Naive thymus-derived CD4-positive, alpha-beta T cell (primary cell): ENCODE measurements at regions of chr19 and their contacts with region 1.

Region 1: GRCh38 chr19:2236314-2237050 is at the starts of genes PLEKHJ1 and SF3A2:
- DNase-seq: peak; percentile 96 to 100 (median 100)
- ATAC-seq: peak; percentile 90
- H3K4me3 ChIP-seq: peak within 1 kb of the TSS; percentile 75
- H3K4me3 Mint-ChIP-seq: peak within 1 kb of the TSS; percentile 96 to 100 (median 98)
- H3K27ac ChIP-seq: peak within 1 kb of the TSS; percentile 93
- H3K27ac Mint-ChIP-seq: peak within 1 kb of the TSS; percentile 96 to 99 (median 98)
- H3K4me1 ChIP-seq: peaks cover 42 to 50% of the 10 kb centered on the region in 2 donors
- H3K4me1 Mint-ChIP-seq: peaks cover 41 to 69% (median 57%) of the 10 kb centered on the region in 7 donors
- H3K27me3 ChIP-seq: no peaks in the 10 kb centered on the region
- H3K27me3 Mint-ChIP-seq: peaks cover 0 to 5% (median 0%) of the 10 kb centered on the region in 5 donors
- total RNA-seq, gene PLEKHJ1: 32.9 to 65.0 (median 50.2) TPM
- total RNA-seq, gene SF3A2: 131 to 150 (median 133) TPM

Region 2: GRCh38 chr19:2096480-2097329 is 139.8 kb before region 1 on chr19 and contains the start of gene IZUMO4:
- CTCF ChIA-PET with region 1: no interaction called
- POLR2A ChIA-PET with region 1: no interaction called
- intact Hi-C with region 1: loop called in 1 of 2 experiments (anchors 1 kb)
- DNase-seq: peak; percentile 98 to 100 (median 99)
- ATAC-seq: peak; percentile 90
- H3K4me3 ChIP-seq: peak within 1 kb of the TSS; percentile 82
- H3K4me3 Mint-ChIP-seq: peak within 1 kb of the TSS; percentile 95 to 98 (median 97)
- H3K27ac ChIP-seq: peak within 1 kb of the TSS; percentile 88
- H3K27ac Mint-ChIP-seq: peak within 1 kb of the TSS; percentile 90 to 98 (median 94)
- H3K4me1 ChIP-seq: peaks cover 13% of the 10 kb centered on the region in 2 donors
- H3K4me1 Mint-ChIP-seq: peaks cover 15 to 37% (median 27%) of the 10 kb centered on the region in 7 donors
- H3K27me3 ChIP-seq: no peaks in the 10 kb centered on the region
- H3K27me3 Mint-ChIP-seq: no peaks in the 10 kb centered on the region
- total RNA-seq, gene IZUMO4: 12.2 to 26.8 (median 15.7) TPM

Region 3: GRCh38 chr19:2176337-2176994 is 60.0 kb before region 1 on chr19:
- CTCF ChIA-PET with region 1: no interaction called
- POLR2A ChIA-PET with region 1: no interaction called
- intact Hi-C with region 1: no loop called
- DNase-seq: no peak
- ATAC-seq: no peak
- H3K4me3 ChIP-seq: no peak overlapping the region
- H3K4me3 Mint-ChIP-seq: no peak overlapping the region
- H3K27ac ChIP-seq: no peak overlapping the region
- H3K27ac Mint-ChIP-seq: no peak overlapping the region
- H3K4me1 ChIP-seq: peaks cover 0 to 4% of the 10 kb centered on the region in 2 donors
- H3K4me1 Mint-ChIP-seq: peaks cover 3 to 41% (median 17%) of the 10 kb centered on the region in 7 donors
- H3K27me3 ChIP-seq: no peaks in the 10 kb centered on the region
- H3K27me3 Mint-ChIP-seq: no peaks in the 10 kb centered on the region

Region 4: GRCh38 chr19:2269244-2269947 is 32.9 kb after region 1 on chr19:
- CTCF ChIA-PET with region 1: interaction called, 22 read pairs
- POLR2A ChIA-PET with region 1: interaction called, 135 read pairs
- intact Hi-C with region 1: loop called (anchors 1 kb)
- DNase-seq: peak; percentile 98 to 100 (median 99)
- ATAC-seq: peak; percentile 90
- H3K4me3 ChIP-seq: peak overlapping the region; percentile 96
- H3K4me3 Mint-ChIP-seq: peak overlapping the region; percentile 86 to 96 (median 90)
- H3K27ac ChIP-seq: peak overlapping the region; percentile 87
- H3K27ac Mint-ChIP-seq: peak overlapping the region; percentile 72 to 94 (median 89)
- H3K4me1 ChIP-seq: peaks cover 32 to 34% of the 10 kb centered on the region in 2 donors
- H3K4me1 Mint-ChIP-seq: peaks cover 28 to 52% (median 35%) of the 10 kb centered on the region in 7 donors
- H3K27me3 ChIP-seq: no peaks in the 10 kb centered on the region
- H3K27me3 Mint-ChIP-seq: no peaks in the 10 kb centered on the region

Region 5: DNA sequence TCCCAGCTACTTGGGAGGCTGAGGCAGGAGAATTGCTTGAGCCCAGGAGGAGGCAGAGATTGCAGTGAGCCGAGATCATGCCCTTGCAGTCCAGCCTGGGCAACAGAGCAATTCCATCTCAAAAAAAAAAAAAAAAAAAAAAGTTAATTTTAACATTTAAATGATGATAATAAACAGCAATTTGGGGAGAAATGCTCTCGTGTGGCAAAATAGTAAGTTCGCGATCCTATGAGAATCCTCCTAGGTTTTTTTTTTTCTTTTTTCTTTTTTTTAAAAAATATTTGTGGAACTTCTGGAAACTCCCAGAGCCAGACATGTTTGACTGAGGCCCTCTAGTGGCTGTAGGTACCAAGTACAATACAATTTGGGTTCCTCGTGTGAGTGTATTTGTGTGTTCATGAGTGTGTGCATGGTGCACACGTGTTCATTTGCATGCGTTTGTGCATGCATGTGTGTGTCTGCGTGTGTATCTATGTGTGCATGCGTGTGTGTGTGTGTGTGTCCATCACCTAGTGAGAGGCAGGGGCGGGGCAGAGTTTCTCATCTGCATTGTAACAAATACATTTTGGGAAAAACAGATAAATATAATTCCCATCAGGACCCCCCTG is 154.7 kb after region 1 on chr19:
- CTCF ChIA-PET with region 1: interaction called, 4 read pairs
- POLR2A ChIA-PET with region 1: interaction called, 4 read pairs
- intact Hi-C with region 1: loop called (anchors 1 kb)
- DNase-seq: peak in 7 of 9 donors; percentile 26 to 59 (median 46)
- ATAC-seq: peak; percentile 88
- H3K4me3 ChIP-seq: no peak overlapping the region
- H3K4me3 Mint-ChIP-seq: no peak overlapping the region
- H3K27ac ChIP-seq: no peak overlapping the region
- H3K27ac Mint-ChIP-seq: peak overlapping the region in 2 of 9 donors; percentile 1 to 91
- H3K4me1 ChIP-seq: no peaks in the 10 kb centered on the region
- H3K4me1 Mint-ChIP-seq: peaks cover 4 to 16% (median 5%) of the 10 kb centered on the region in 7 donors
- H3K27me3 ChIP-seq: no peaks in the 10 kb centered on the region
- H3K27me3 Mint-ChIP-seq: peaks cover 0 to 13% (median 0%) of the 10 kb centered on the region in 5 donors

Region 6: DNA sequence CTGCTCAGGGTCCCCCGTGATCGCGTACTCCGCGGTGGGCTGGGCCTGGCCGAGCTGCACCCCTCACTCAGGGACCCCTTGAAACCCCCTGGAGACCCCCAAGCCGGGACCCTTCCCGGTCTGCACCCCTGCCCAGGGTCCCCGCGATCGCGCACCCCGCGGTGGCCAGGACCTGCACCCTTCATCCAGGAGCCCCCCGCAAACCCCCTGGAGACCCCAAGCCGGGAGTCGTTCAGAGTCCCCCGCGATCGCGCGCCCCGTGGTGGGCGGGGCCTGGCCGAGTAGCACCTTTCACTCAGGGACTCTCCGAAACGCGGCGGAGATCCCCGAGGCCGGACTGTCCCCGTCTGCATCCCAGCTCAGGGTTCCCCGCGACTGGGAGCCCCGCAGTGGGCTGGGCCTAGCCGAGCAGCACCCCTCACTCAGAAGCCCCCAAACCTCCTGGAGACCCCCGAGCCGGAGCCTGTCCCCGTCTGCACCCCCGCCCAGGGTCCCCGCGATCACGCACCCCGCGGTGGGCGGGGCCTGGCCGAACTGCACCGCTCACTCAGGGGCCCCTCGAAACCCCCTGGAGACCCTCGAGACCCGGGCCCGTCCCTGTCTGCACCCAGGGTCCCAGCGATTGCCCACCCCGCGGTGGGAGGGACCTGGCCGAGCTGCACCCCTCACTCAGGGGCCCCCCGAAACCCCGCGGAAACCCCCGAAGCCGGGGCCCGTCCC is 219.5 kb after region 1 on chr19:
- CTCF ChIA-PET with region 1: no interaction called
- POLR2A ChIA-PET with region 1: no interaction called
- intact Hi-C with region 1: loop called (anchors 1 to 5 kb)
- DNase-seq: peak in 5 of 9 donors; percentile 14 to 68 (median 29)
- ATAC-seq: peak; percentile 59
- H3K4me3 ChIP-seq: peak overlapping the region; percentile 79
- H3K4me3 Mint-ChIP-seq: peak overlapping the region; percentile 77 to 90 (median 84)
- H3K27ac ChIP-seq: peak overlapping the region; percentile 86
- H3K27ac Mint-ChIP-seq: peak overlapping the region in 6 of 9 donors; percentile 77 to 88 (median 82)
- H3K4me1 ChIP-seq: peaks cover 14 to 18% of the 10 kb centered on the region in 2 donors
- H3K4me1 Mint-ChIP-seq: peaks cover 14 to 28% (median 18%) of the 10 kb centered on the region in 7 donors
- H3K27me3 ChIP-seq: no peaks in the 10 kb centered on the region
- H3K27me3 Mint-ChIP-seq: no peaks in the 10 kb centered on the region

Region 7: DNA sequence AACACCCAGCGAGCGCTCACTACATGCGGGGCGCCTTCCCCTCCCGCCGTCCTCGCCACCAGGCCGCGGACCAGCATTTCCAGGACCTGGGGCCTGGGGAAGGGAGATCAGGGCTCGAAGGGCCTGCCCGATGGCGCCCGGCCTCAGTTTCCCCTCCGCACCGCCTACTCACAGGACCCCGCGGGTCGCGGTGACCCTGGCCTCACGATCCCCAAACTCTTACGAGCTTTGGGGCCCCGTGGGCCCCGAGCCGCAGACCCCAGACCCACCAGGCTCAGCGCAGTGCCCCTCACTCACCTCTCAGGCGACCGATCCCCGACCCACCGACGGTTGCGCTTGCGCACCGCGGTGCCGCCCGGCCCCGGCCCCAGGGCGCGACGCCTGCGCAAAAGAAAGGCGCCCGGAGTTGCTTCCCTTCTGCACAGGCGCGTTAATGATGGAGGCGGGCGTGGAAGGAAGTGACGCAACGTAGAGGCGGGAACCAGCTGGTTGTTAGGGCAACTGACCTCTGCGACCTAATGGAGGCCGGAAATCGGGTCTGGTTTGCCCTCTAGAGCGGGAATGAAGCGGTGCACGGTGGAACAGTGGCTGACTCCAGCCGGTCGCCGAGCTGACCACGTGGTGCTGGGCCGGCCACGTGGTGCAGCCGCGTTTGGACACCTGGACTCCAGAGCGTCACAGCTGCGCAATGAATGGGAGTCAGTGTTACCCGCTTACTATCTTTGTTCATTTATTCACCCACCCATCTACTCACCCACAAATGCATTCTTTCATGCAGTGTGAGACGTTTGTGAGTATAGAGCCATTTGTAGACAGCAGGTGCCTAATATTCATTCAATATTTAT is 546.7 kb after region 1 on chr19 and contains the start of gene SGTA:
- CTCF ChIA-PET with region 1: no interaction called
- POLR2A ChIA-PET with region 1: no interaction called
- intact Hi-C with region 1: loop called in 1 of 2 experiments (anchors 2 kb)
- DNase-seq: peak; percentile 82 to 97 (median 95)
- ATAC-seq: peak; percentile 73
- H3K4me3 ChIP-seq: peak within 1 kb of the TSS; percentile 90
- H3K4me3 Mint-ChIP-seq: peak within 1 kb of the TSS; percentile 83 to 98 (median 88)
- H3K27ac ChIP-seq: peak within 1 kb of the TSS; percentile 95
- H3K27ac Mint-ChIP-seq: peak within 1 kb of the TSS; percentile 78 to 97 (median 92)
- H3K4me1 ChIP-seq: peaks cover 33 to 35% of the 10 kb centered on the region in 2 donors
- H3K4me1 Mint-ChIP-seq: peaks cover 29 to 64% (median 51%) of the 10 kb centered on the region in 7 donors
- H3K27me3 ChIP-seq: no peaks in the 10 kb centered on the region
- H3K27me3 Mint-ChIP-seq: no peaks in the 10 kb centered on the region
- total RNA-seq, gene SGTA: 32.2 to 47.8 (median 37.9) TPM